CD14-positive monocyte (primary cell): ENCODE measurements at regions of chr9 and their contacts with region 1.

Region 1: DNA sequence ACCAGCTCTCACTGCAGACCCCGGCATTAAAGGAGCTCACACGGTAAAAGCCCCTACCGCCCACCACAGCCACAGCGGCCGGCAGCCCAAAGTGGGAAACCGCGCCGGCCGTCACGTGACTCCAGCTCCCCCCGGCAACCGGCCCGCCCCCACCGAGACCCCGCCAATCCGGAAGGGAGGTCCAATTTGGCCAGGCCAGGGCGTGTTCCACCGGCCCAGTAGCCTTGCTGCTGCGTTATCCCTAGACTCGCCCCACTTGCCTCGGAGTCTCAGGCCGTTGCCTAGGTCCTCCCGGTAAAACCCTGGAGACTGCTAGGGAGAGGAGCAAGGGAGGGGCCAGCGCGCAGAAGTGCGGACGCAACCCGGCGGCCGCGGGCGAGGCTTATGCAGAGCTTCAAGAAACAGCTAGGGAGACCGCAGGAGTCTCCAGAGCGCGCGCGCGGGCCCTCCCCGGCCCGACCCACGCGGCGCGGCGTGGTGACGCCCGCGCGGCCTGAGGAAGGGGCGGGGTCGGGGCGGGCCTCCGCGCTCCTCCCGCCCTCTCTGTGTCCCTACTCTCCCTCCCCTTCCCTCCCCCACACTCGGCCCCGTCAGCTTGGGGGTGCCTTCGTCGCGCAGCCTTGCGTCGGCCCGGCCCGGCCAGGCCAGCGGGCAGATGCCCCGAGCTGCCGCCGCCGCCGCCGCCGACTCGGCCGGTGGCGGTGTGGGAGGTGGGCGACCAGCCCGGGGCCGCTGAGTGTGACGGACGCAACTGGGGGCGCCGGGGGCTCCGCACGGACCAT is at the start of gene RIC1:
- DNase-seq: peak; percentile 89 to 93 (median 91)
- H3K4me3 ChIP-seq: peak within 1 kb of the TSS; percentile 70 to 100 (median 92)
- H3K4me3 Mint-ChIP-seq: peak within 1 kb of the TSS; percentile 96 to 100
- H3K27ac ChIP-seq: peak within 1 kb of the TSS; percentile 88 to 97
- H3K27ac Mint-ChIP-seq: peak within 1 kb of the TSS; percentile 96 to 99 (median 98)
- H3K4me1 ChIP-seq: peaks cover 51 to 76% of the 10 kb centered on the region in 2 donors
- H3K4me1 Mint-ChIP-seq: peaks cover 73% of the 10 kb centered on the region
- H3K27me3 ChIP-seq: no peaks in the 10 kb centered on the region
- H3K27me3 Mint-ChIP-seq: no peaks in the 10 kb centered on the region
- CTCF ChIP-seq: no peak
- polyA plus RNA-seq, gene RIC1: 13.4 to 36.4 (median 16.3) TPM

Region 2: GRCh38 chr9:4792572-4793458 is 835.9 kb before region 1 on chr9 and contains the start of gene RCL1:
- intact Hi-C with region 1: loop called in 1 of 2 experiments (anchors 10 kb)
- DNase-seq: peak; percentile 94 to 97 (median 95)
- H3K4me3 ChIP-seq: peak within 1 kb of the TSS; percentile 74 to 82 (median 80)
- H3K4me3 Mint-ChIP-seq: peak within 1 kb of the TSS; percentile 92 to 95
- H3K27ac ChIP-seq: peak within 1 kb of the TSS; percentile 42 to 69
- H3K27ac Mint-ChIP-seq: peak within 1 kb of the TSS; percentile 67 to 90 (median 88)
- H3K4me1 ChIP-seq: peaks cover 20 to 26% of the 10 kb centered on the region in 2 donors
- H3K4me1 Mint-ChIP-seq: peaks cover 23% of the 10 kb centered on the region
- H3K27me3 ChIP-seq: peaks cover 8 to 15% of the 10 kb centered on the region in 2 donors
- H3K27me3 Mint-ChIP-seq: peaks cover 15 to 22% (median 20%) of the 10 kb centered on the region in 3 donors
- CTCF ChIP-seq: no peak
- polyA plus RNA-seq, gene RCL1: 2.2 to 3.0 (median 3.0) TPM

Region 3: GRCh38 chr9:5566054-5566618 is 62.6 kb before region 1 on chr9:
- intact Hi-C with region 1: loop called in 1 of 2 experiments (anchors 10 kb)
- DNase-seq: peak; percentile 59 to 70 (median 61)
- H3K4me3 ChIP-seq: no peak overlapping the region
- H3K4me3 Mint-ChIP-seq: no peak overlapping the region
- H3K27ac ChIP-seq: peak overlapping the region; percentile 68 to 69
- H3K27ac Mint-ChIP-seq: peak overlapping the region; percentile 3 to 87 (median 75)
- H3K4me1 ChIP-seq: peaks cover 60 to 65% of the 10 kb centered on the region in 2 donors
- H3K4me1 Mint-ChIP-seq: peaks cover 69% of the 10 kb centered on the region
- H3K27me3 ChIP-seq: no peaks in the 10 kb centered on the region
- H3K27me3 Mint-ChIP-seq: no peaks in the 10 kb centered on the region
- CTCF ChIP-seq: no peak

Region 4: GRCh38 chr9:5671711-5672353 is 43.1 kb after region 1 on chr9:
- intact Hi-C with region 1: loop called in 1 of 2 experiments (anchors 2 kb)
- DNase-seq: no peak
- H3K4me3 ChIP-seq: no peak overlapping the region
- H3K4me3 Mint-ChIP-seq: no peak overlapping the region
- H3K27ac ChIP-seq: no peak overlapping the region
- H3K27ac Mint-ChIP-seq: peak overlapping the region in 1 of 7 donors; percentile 11
- H3K4me1 ChIP-seq: no peaks in the 10 kb centered on the region
- H3K4me1 Mint-ChIP-seq: peaks cover 2% of the 10 kb centered on the region
- H3K27me3 ChIP-seq: no peaks in the 10 kb centered on the region
- H3K27me3 Mint-ChIP-seq: no peaks in the 10 kb centered on the region
- CTCF ChIP-seq: no peak

Region 5: GRCh38 chr9:5688109-5688508 is 59.4 kb after region 1 on chr9:
- intact Hi-C with region 1: no loop called
- DNase-seq: no peak
- H3K4me3 ChIP-seq: no peak overlapping the region
- H3K4me3 Mint-ChIP-seq: no peak overlapping the region
- H3K27ac ChIP-seq: no peak overlapping the region
- H3K27ac Mint-ChIP-seq: no peak overlapping the region
- H3K4me1 ChIP-seq: no peaks in the 10 kb centered on the region
- H3K4me1 Mint-ChIP-seq: peaks cover 4% of the 10 kb centered on the region
- H3K27me3 ChIP-seq: no peaks in the 10 kb centered on the region
- H3K27me3 Mint-ChIP-seq: no peaks in the 10 kb centered on the region
- CTCF ChIP-seq: no peak

Region 6: GRCh38 chr9:5832543-5833529 is 204.1 kb after region 1 on chr9 and contains the start of gene ERMP1:
- intact Hi-C with region 1: loop called in 1 of 2 experiments (anchors 10 kb)
- DNase-seq: peak; percentile 67 to 77 (median 74)
- H3K4me3 ChIP-seq: peak within 1 kb of the TSS; percentile 48 to 88 (median 80)
- H3K4me3 Mint-ChIP-seq: peak within 1 kb of the TSS; percentile 93 to 97
- H3K27ac ChIP-seq: no peak within 1 kb of the TSS
- H3K27ac Mint-ChIP-seq: peak within 1 kb of the TSS in 3 of 7 donors; percentile 63 to 79 (median 73)
- H3K4me1 ChIP-seq: peaks cover 22 to 32% of the 10 kb centered on the region in 2 donors
- H3K4me1 Mint-ChIP-seq: peaks cover 30% of the 10 kb centered on the region
- H3K27me3 ChIP-seq: no peaks in the 10 kb centered on the region
- H3K27me3 Mint-ChIP-seq: peaks cover 0 to 5% (median 1%) of the 10 kb centered on the region in 3 donors
- CTCF ChIP-seq: peak; percentile 95
- polyA plus RNA-seq, gene ERMP1: 2.5 to 3.7 (median 3.6) TPM

Region 7: DNA sequence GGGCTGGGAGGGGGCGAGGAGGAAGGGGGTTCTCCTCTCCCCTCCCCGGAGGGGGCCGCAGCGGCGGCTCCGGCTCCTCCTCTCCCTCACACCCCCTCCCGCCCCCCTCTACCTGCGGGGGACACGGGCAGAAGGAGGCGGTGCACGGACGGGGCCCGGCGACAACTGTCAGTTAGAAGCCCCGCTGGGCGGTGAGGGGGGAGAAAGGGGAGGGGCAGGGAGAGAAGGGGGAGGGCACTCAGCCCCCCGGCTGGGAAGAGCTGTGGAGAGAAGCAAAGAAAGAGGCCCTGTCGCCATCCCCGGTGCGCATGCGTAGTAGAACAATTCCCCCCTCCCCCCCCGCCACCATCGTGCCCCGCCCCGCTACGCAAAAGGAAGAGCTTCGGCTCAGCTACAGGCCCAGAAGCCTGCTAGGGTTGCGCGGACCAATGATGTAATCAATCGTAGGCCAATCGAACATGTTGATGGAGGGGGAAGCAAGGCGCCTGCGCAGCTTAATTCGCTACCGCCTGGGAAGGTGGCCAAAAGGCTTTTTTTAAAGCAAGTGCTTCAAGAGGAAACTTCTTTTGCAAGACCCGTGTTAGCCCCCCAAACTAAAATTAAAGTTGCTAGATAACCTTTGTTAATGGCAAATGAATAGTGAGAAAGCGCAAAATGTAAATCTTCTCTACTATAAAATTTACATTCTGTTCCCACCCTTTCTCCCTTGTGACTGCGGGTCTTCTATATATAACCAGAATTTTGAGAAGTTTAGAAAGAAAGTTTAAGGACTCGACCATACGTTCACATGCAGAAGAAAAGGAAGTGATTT is 379.7 kb after region 1 on chr9:
- intact Hi-C with region 1: loop called in 1 of 2 experiments (anchors 5 kb)
- DNase-seq: peak; percentile 97 to 99 (median 98)
- H3K4me3 ChIP-seq: peak overlapping the region; percentile 90 to 93 (median 92)
- H3K4me3 Mint-ChIP-seq: peak overlapping the region; percentile 79 to 84
- H3K27ac ChIP-seq: peak overlapping the region; percentile 81 to 92
- H3K27ac Mint-ChIP-seq: peak overlapping the region; percentile 79 to 95 (median 90)
- H3K4me1 ChIP-seq: peaks cover 18 to 26% of the 10 kb centered on the region in 2 donors
- H3K4me1 Mint-ChIP-seq: peaks cover 31% of the 10 kb centered on the region
- H3K27me3 ChIP-seq: no peaks in the 10 kb centered on the region
- H3K27me3 Mint-ChIP-seq: no peaks in the 10 kb centered on the region
- CTCF ChIP-seq: no peak